ENCODE measurements at regions of chr9 and their contacts with region 1.

Region 1: GRCh38 chr9:16899606-16900005 is 29.1 kb upstream of the BNC2 start:
- DNase-seq: peak; percentile 59
- ATAC-seq: peak; percentile 86
- H3K4me3 ChIP-seq: no peak overlapping the region
- H3K27ac ChIP-seq: no peak overlapping the region
- H3K4me1 ChIP-seq: no peaks in the 10 kb centered on the region
- H3K27me3 ChIP-seq: no peaks in the 10 kb centered on the region
- CTCF ChIP-seq: no peak
- POLR2A ChIP-seq: no peak
- RAD21 ChIP-seq: no peak

Region 2: DNA sequence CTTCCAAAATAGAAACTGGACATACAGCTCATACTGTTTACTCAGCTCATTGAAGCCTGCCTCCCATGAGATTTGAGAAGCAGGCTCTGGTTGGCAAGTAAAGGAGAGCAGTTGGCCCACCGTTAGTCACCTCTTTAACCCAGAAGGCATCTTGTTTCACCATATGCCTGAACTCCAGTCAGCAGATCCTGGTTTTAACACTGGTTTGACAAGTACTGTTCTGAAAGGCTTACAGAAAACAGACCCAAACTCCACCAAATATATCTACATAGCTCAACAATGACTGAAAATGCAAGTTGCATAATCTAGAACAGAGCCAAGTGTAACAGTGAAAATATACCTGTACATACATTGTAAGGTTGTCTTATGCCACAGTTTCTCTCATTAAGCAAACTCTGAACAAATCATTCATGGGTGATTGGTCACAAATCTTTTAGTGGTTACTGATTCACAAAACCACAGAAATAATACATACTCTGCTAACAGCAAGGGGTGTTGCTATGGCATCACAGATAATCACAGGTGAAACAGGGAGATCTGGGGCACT is 227.9 kb before region 1 on chr9:
- CTCF ChIA-PET with region 1: no interaction called
- POLR2A ChIA-PET with region 1: no interaction called
- dilution Hi-C with region 1: no loop called
- in situ Hi-C with region 1: no loop called
- intact Hi-C with region 1: no loop called
- DNase-seq: peak; percentile 83
- ATAC-seq: peak; percentile 72
- H3K4me3 ChIP-seq: no peak overlapping the region
- H3K27ac ChIP-seq: no peak overlapping the region
- H3K4me1 ChIP-seq: peaks cover 8% of the 10 kb centered on the region
- H3K27me3 ChIP-seq: no peaks in the 10 kb centered on the region
- CTCF ChIP-seq: no peak
- POLR2A ChIP-seq: no peak
- RAD21 ChIP-seq: no peak

Region 3: DNA sequence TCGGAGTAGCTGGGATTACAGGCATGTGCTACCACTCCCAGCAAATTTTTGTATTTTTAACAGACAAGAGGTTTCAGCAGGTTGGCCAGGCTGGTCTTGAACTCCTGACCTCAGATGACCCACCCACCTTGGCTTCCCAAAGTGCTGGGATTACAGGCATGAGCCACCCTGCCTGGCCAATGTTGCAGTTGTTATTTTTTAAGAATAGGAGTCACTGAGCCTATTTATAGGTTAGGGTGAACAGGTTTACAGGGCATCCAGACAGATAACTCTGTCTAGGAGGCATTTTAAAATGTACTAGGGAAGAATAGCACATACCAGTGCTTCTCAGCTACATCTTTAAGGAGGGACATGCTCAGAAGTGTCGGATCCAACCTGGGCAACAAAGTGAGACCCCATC is 31.0 kb after region 1 on chr9:
- CTCF ChIA-PET with region 1: no interaction called
- POLR2A ChIA-PET with region 1: no interaction called
- dilution Hi-C with region 1: no loop called
- in situ Hi-C with region 1: no loop called
- intact Hi-C with region 1: loop called (anchors 5 kb)
- DNase-seq: no peak
- ATAC-seq: no peak
- H3K4me3 ChIP-seq: no peak overlapping the region
- H3K27ac ChIP-seq: no peak overlapping the region
- H3K4me1 ChIP-seq: peaks cover 3% of the 10 kb centered on the region; the same call in 1 of the 2 replicates
- H3K27me3 ChIP-seq: no peaks in the 10 kb centered on the region
- CTCF ChIP-seq: no peak
- POLR2A ChIP-seq: no peak
- RAD21 ChIP-seq: no peak

Measured in IMR-90 (cell line).